Spleen (tissue), 13 donors: ENCODE measurements at regions of chr21 and their contacts with region 1.

Region 1: GRCh38 chr21:35616090-35616489 is 444.2 kb downstream of the SETD4 start:
- DNase-seq: no peak
- H3K4me3 ChIP-seq: no peak overlapping the region
- H3K27ac ChIP-seq: no peak overlapping the region
- H3K4me1 ChIP-seq: peaks cover 0 to 9% (median 0%) of the 10 kb centered on the region in 6 donors
- H3K27me3 ChIP-seq: no peaks in the 10 kb centered on the region
- CTCF ChIP-seq: peak in 9 of 11 experiments; percentile 22 to 57 (median 37)
- POLR2A ChIP-seq: no peak

Region 2: GRCh38 chr21:34745557-34746255 is 870.4 kb before region 1 on chr21:
- intact Hi-C with region 1: loop called (anchors 10 kb)
- DNase-seq: peak; percentile 87
- H3K4me3 ChIP-seq: peak overlapping the region in 4 of 8 donors; percentile 3 to 51 (median 10)
- H3K27ac ChIP-seq: peak overlapping the region in 3 of 8 donors; percentile 6 to 35 (median 11)
- H3K4me1 ChIP-seq: peaks cover 0 to 16% (median 12%) of the 10 kb centered on the region in 6 donors
- H3K27me3 ChIP-seq: peaks cover 0 to 16% (median 0%) of the 10 kb centered on the region in 7 donors
- CTCF ChIP-seq: peak; percentile 57 to 90 (median 79)
- POLR2A ChIP-seq: no peak